ENCODE measurements at regions of chr12 and their contacts with region 1.

Region 1: DNA sequence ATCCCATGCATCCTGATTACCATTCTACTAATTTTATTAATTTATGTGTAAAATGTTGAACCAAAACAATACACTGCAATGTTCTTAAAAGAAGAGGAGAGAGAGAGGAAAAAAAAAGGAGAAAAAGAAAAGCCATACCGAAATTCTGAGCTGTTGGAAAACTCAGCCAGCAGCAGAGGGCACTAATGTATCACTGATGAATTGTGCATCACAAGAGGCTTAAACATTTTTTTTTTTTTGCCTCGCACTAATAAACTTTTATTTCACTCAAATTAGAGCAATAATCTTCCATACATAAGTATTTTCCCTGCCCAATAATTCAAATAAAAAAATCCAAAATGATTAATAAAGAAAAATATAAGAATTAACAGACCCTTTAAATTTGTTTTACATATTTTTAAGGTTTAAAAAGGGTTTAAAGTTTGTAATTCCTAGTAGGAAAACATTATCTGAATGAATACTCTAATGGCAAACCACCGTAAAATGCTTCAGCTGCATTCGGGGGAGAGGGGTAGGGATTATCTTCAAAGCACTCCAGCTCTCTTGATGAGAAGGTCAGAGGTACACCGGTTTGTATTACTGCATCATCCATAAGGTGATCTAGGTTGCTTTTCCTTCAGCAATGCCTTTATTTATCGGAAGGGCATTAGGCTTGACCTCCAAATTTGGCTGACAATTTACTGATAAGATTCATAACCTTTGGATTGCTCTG is 41.9 kb downstream of the ATP23 start:
- DNase-seq: peak; percentile 67
- ATAC-seq: peak; percentile 63
- H3K4me3 ChIP-seq: no peak overlapping the region
- H3K27ac ChIP-seq: no peak overlapping the region
- H3K4me1 ChIP-seq: peaks cover 2% of the 10 kb centered on the region; the same call in 1 of the 2 replicates
- H3K27me3 ChIP-seq: no peaks in the 10 kb centered on the region; the same call in 1 of the 2 replicates
- CTCF ChIP-seq: peak; percentile 83
- POLR2A ChIP-seq: no peak
- RAD21 ChIP-seq: peak; percentile 81

Region 2: DNA sequence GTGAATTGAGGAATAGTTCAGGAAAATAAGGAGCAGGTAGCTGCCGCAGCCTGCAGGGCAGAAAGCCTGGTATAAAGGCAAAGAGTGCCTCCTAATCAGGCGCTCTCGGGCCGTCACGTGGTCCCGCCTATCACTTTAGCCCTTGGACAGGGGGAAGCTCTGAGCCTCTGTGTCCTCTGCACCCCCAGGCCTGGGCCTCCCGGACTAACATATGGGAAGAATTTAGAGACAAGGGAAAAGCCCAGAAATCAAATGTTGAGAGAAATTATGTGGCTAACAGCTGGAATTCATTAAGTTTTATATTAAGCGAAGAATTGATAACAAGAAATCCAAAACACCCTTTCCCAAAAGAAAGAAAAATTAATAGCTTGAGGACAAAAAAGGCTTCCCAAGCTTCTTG is 375.8 kb after region 1 on chr12:
- CTCF ChIA-PET with region 1: no interaction called
- POLR2A ChIA-PET with region 1: no interaction called
- dilution Hi-C with region 1: no loop called
- in situ Hi-C with region 1: loop called (anchors 10 kb)
- intact Hi-C with region 1: no loop called
- DNase-seq: peak; percentile 37
- ATAC-seq: peak; percentile 44
- H3K4me3 ChIP-seq: no peak overlapping the region
- H3K27ac ChIP-seq: peak overlapping the region; percentile 59; the same call in 1 of the 2 replicates
- H3K4me1 ChIP-seq: peaks cover 8% of the 10 kb centered on the region
- H3K27me3 ChIP-seq: no peaks in the 10 kb centered on the region
- CTCF ChIP-seq: no peak
- POLR2A ChIP-seq: no peak
- RAD21 ChIP-seq: no peak

Region 3: GRCh38 chr12:58888131-58888783 is 905.0 kb after region 1 on chr12:
- CTCF ChIA-PET with region 1: no interaction called
- POLR2A ChIA-PET with region 1: no interaction called
- dilution Hi-C with region 1: no loop called
- in situ Hi-C with region 1: loop called (anchors 25 kb)
- intact Hi-C with region 1: no loop called
- DNase-seq: peak; percentile 63
- ATAC-seq: peak; percentile 48
- H3K4me3 ChIP-seq: no peak overlapping the region
- H3K27ac ChIP-seq: no peak overlapping the region
- H3K4me1 ChIP-seq: peaks cover 2% of the 10 kb centered on the region; the same call in 1 of the 2 replicates
- H3K27me3 ChIP-seq: no peaks in the 10 kb centered on the region
- CTCF ChIP-seq: no peak
- POLR2A ChIP-seq: no peak
- RAD21 ChIP-seq: no peak

Region 4: DNA sequence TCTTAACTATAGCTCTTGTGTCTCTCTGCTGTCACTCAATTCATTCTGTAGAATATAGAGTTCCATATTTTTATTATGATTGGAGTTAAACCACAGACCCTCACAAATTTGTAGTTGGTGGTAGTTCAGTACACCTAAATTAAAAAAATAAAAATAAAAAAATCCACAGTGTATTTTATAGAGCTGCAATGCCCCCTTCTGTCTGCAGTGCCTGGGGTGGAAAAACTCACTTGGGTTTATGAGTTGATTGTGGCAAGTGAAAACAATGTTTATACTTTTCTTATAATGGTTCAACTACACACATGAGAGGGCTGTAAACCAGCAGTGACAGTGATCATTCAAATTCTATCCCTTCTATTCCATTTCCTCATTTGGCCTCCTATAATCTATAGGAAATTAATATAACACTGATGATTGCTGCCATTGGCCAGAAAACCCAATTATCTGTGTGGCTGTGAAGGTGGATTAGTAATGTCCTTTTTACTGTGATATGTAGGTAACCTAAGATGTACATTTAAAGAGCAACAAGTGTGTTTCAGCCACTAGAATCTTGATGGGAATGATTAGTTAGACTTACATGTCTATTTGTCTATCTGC is 1103.9 kb after region 1 on chr12:
- CTCF ChIA-PET with region 1: no interaction called
- POLR2A ChIA-PET with region 1: no interaction called
- dilution Hi-C with region 1: no loop called
- in situ Hi-C with region 1: loop called (anchors 5 kb)
- intact Hi-C with region 1: loop called (anchors 2 kb)
- DNase-seq: peak; percentile 39
- ATAC-seq: peak; percentile 69
- H3K4me3 ChIP-seq: no peak overlapping the region
- H3K27ac ChIP-seq: no peak overlapping the region
- H3K4me1 ChIP-seq: peaks cover 13% of the 10 kb centered on the region
- H3K27me3 ChIP-seq: no peaks in the 10 kb centered on the region
- CTCF ChIP-seq: peak; percentile 81
- POLR2A ChIP-seq: no peak
- RAD21 ChIP-seq: peak; percentile 74

Region 5: GRCh38 chr12:59149997-59150642 is 1166.8 kb after region 1 on chr12:
- CTCF ChIA-PET with region 1: no interaction called
- POLR2A ChIA-PET with region 1: no interaction called
- dilution Hi-C with region 1: no loop called
- in situ Hi-C with region 1: loop called (anchors 10 kb)
- intact Hi-C with region 1: loop called (anchors 1 kb)
- DNase-seq: peak; percentile 84
- ATAC-seq: peak; percentile 96
- H3K4me3 ChIP-seq: no peak overlapping the region
- H3K27ac ChIP-seq: peak overlapping the region; percentile 2; the same call in 1 of the 2 replicates
- H3K4me1 ChIP-seq: peaks cover 4% of the 10 kb centered on the region; the same call in 1 of the 2 replicates
- H3K27me3 ChIP-seq: no peaks in the 10 kb centered on the region
- CTCF ChIP-seq: peak; percentile 100
- POLR2A ChIP-seq: no peak
- RAD21 ChIP-seq: peak; percentile 83

Region 6: DNA sequence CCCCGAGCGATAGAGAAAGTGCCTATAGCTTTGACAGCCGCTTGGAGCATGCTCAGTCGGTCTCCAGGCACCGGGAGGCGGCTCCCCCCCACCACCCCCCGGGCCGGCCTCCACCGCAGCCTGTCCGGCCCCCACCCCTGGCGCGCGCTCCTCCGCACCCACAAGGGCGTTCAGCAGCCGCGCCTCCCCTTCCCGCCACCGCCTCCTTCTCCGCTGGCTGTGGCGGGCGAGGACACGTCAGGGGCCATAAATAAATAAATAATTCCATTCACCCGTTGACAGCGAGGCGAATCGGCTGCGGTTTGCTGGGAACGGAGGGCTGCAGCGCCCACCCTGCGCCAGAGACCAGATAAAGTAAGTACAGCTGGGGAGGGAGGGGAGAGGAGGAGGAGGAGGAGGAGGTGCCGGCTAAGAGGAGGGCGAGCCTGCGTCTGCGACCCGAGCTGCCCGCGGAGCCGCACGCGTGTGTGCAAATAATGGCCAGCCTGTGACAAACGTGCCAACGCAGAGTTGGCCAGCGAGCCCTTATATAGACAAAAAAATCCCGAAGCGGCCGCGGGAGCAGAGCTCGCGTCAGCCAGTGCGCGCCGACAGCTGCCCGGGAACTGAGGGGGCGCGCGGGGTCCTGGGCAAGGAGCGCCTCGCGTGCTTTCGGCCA is 1612.7 kb after region 1 on chr12 and contains the start of gene SLC16A7:
- CTCF ChIA-PET with region 1: no interaction called
- POLR2A ChIA-PET with region 1: no interaction called
- dilution Hi-C with region 1: no loop called
- in situ Hi-C with region 1: no loop called
- intact Hi-C with region 1: loop called (anchors 2 kb)
- DNase-seq: peak; percentile 86
- ATAC-seq: peak; percentile 82
- H3K4me3 ChIP-seq: peak within 1 kb of the TSS; percentile 87
- H3K27ac ChIP-seq: peak within 1 kb of the TSS; percentile 97
- H3K4me1 ChIP-seq: no peaks in the 10 kb centered on the region
- H3K27me3 ChIP-seq: no peaks in the 10 kb centered on the region
- CTCF ChIP-seq: no peak; the same call in 1 of the 2 replicates
- POLR2A ChIP-seq: peak; percentile 52
- RAD21 ChIP-seq: no peak
- total RNA-seq, gene SLC16A7: 21.5 and 30.0 TPM in 2 replicates